ENCODE measurements at regions of chr15 and their contacts with region 1.

Region 1: DNA sequence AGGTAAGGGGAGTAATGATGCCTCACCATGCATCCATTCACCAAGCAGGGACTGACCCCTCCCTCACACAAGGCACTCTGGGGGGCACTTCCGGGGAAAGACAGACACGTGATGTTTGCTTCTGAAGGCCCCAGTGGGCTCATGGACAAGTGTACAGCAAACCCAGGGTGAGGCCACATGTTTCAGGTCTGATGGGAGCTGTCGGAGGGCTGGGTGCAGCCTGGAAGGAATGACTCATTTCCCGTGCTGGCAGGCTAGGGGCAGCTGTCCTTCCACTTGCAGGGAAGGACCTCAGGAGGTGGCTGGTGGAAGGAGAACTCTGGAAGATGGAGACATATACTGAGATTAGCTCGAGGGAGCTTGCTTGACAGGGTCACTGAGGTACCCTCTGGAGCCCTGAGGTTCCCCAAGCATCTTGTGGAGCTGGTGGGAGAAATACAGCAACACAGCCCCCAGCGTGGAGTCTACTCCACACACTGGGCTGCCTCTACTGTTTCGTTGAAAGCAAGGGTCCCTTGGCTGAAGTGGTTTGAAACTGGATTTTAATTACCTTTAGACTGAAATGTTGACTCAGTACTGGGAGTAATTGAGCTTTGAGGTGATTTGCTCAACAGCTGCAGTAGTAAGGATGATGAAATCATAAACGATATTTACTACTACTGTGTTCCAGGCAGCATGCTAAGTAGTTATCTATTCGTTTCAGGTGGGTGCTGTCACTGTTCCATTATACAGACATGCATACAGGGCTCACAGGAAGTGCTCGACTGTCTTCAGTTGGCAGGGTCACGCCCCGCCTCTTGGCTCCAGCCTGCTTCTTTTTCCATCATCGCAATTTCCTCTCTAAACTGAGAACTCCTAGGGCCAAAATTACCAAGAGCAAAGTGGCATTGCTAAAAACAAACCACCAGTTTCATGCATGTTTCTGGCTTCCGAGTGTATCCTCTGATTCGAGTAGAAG is 230.4 kb downstream of the ADAMTS17 start:
- DNase-seq: peak; percentile 75
- H3K4me3 Mint-ChIP-seq: no peak overlapping the region
- H3K27ac Mint-ChIP-seq: peak overlapping the region; percentile 95
- H3K4me1 Mint-ChIP-seq: peaks cover 27% of the 10 kb centered on the region
- H3K27me3 Mint-ChIP-seq: no peaks in the 10 kb centered on the region

Region 2: DNA sequence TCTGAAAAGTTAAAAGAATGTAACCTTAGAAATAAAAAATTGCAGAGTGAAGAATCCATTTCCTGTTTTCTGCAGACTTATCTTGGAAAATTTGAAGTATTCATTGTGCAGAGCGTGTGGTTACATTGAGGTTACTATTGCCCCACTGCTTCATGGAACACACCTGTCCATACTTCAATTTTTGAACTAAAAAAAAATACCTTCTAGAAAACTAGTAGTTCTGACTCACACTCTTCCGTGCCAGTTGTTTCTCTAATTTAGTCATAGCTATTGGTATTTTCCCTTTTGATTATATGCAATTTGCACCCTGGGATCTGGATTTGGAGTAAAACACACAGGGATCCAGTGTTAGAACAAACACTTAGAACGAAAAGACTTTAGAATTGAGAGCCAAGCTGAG is 266.4 kb before region 1 on chr15:
- CTCF ChIA-PET with region 1: no interaction called
- POLR2A ChIA-PET with region 1: no interaction called
- intact Hi-C with region 1: loop called (anchors 10 kb)
- DNase-seq: peak; percentile 42
- H3K4me3 Mint-ChIP-seq: no peak overlapping the region
- H3K27ac Mint-ChIP-seq: peak overlapping the region; percentile 46
- H3K4me1 Mint-ChIP-seq: peaks cover 49% of the 10 kb centered on the region
- H3K27me3 Mint-ChIP-seq: no peaks in the 10 kb centered on the region

Region 3: DNA sequence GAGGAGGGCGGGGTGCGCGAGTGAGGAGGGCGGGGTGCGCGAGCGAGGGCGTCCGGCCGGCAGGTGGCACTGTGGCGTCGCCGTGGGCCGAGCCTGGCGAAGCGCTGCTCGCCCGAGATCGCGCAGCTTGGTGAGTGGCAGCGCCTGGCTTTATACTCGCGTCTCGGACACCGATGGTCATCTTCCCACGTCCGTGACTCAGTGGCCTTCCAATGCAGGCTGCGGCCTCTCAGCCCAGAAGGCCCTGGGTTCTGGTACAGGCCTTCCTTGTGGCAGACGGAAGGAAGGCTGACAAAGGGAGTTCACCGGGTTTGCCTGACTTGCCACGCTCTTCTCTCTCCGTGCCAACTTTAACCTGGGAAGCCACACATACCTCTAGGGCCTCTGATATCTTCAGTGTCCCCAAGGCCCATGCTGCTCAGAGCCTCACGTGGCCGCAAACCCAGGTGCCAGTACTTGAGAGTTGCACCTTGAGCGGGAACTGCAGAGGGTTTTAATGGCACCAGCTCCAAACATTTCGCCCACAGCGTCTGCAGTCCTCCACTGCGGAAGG is 182.9 kb before region 1 on chr15:
- CTCF ChIA-PET with region 1: interaction called, 4 read pairs
- POLR2A ChIA-PET with region 1: no interaction called
- intact Hi-C with region 1: loop called (anchors 2 kb)
- DNase-seq: peak; percentile 87
- H3K4me3 Mint-ChIP-seq: peak overlapping the region; percentile 77
- H3K27ac Mint-ChIP-seq: peak overlapping the region; percentile 42
- H3K4me1 Mint-ChIP-seq: peaks cover 8% of the 10 kb centered on the region
- H3K27me3 Mint-ChIP-seq: no peaks in the 10 kb centered on the region

Region 4: GRCh38 chr15:100008258-100008657 is 103.1 kb before region 1 on chr15:
- CTCF ChIA-PET with region 1: no interaction called
- POLR2A ChIA-PET with region 1: no interaction called
- intact Hi-C with region 1: loop called (anchors 10 kb)
- DNase-seq: no peak
- H3K4me3 Mint-ChIP-seq: no peak overlapping the region
- H3K27ac Mint-ChIP-seq: no peak overlapping the region
- H3K4me1 Mint-ChIP-seq: no peaks in the 10 kb centered on the region
- H3K27me3 Mint-ChIP-seq: no peaks in the 10 kb centered on the region

Region 5: DNA sequence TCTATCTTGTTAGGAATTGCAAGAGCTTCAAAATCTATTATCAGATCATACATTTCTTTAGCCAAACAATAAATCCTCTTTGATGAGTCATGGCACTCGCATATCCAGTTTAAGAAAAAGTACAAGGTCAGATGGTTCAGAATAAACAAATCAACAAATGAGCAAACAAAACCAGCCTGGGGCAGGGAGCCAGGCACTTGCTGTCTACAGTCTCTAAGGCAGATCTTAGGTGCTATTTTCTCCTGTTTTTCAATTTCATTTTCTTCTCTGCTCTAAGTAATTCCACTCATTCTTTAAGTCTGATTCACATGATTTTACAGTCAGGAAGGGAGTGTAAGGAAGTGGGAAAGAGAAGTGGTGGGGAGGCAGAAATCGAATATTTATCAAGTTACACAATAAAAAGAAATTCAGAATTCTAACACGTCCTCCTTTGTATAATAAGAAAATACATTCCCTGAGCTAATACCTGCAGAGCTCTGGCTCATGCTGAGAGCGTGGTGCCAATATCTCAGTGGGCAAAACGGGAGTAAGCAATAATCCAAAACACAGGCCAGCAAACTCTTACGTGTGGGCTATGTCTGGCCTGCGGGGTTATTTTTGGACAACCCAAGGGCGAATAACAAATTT is 68.3 kb before region 1 on chr15:
- CTCF ChIA-PET with region 1: no interaction called
- POLR2A ChIA-PET with region 1: no interaction called
- intact Hi-C with region 1: no loop called
- DNase-seq: no peak
- H3K4me3 Mint-ChIP-seq: no peak overlapping the region
- H3K27ac Mint-ChIP-seq: no peak overlapping the region
- H3K4me1 Mint-ChIP-seq: peaks cover 4% of the 10 kb centered on the region
- H3K27me3 Mint-ChIP-seq: no peaks in the 10 kb centered on the region

Region 6: GRCh38 chr15:100053474-100054121 is 57.8 kb before region 1 on chr15:
- CTCF ChIA-PET with region 1: no interaction called
- POLR2A ChIA-PET with region 1: no interaction called
- intact Hi-C with region 1: no loop called
- DNase-seq: no peak
- H3K4me3 Mint-ChIP-seq: no peak overlapping the region
- H3K27ac Mint-ChIP-seq: no peak overlapping the region
- H3K4me1 Mint-ChIP-seq: no peaks in the 10 kb centered on the region
- H3K27me3 Mint-ChIP-seq: no peaks in the 10 kb centered on the region

Region 7: GRCh38 chr15:100170291-100171210 is 59.2 kb after region 1 on chr15:
- CTCF ChIA-PET with region 1: no interaction called
- POLR2A ChIA-PET with region 1: no interaction called
- intact Hi-C with region 1: loop called (anchors 1 kb)
- DNase-seq: peak; percentile 74
- H3K4me3 Mint-ChIP-seq: no peak overlapping the region
- H3K27ac Mint-ChIP-seq: peak overlapping the region; percentile 83
- H3K4me1 Mint-ChIP-seq: peaks cover 12% of the 10 kb centered on the region
- H3K27me3 Mint-ChIP-seq: peaks cover 2% of the 10 kb centered on the region

Region 8: GRCh38 chr15:100341662-100342560 is 230.5 kb after region 1 on chr15 and contains the start of gene ADAMTS17:
- CTCF ChIA-PET with region 1: interaction called, 3 read pairs
- POLR2A ChIA-PET with region 1: no interaction called
- intact Hi-C with region 1: loop called (anchors 5 kb)
- DNase-seq: peak; percentile 95
- H3K4me3 Mint-ChIP-seq: peak within 1 kb of the TSS; percentile 54
- H3K27ac Mint-ChIP-seq: no peak within 1 kb of the TSS
- H3K4me1 Mint-ChIP-seq: peaks cover 15% of the 10 kb centered on the region
- H3K27me3 Mint-ChIP-seq: no peaks in the 10 kb centered on the region
- total RNA-seq, gene ADAMTS17: 0.99 to 1.2 TPM

Region 9: DNA sequence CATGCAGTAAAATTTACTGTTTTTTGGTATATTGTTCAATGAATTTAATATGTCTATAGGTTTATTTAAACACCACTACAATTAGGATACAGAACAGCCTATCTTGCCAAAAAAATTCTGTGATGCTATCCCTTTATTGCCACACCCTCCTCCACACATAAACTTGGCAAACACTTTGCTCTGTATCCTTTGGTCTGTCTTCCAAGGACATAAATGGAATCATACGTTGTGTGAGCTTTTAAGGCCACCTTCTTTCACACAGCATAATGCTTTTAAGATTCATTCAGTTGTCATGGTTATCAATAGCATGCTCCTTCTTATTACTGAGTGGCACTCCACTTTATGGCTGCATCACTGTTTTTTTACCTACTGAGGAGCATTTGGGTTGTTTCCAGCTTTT is 345.8 kb after region 1 on chr15:
- CTCF ChIA-PET with region 1: no interaction called
- POLR2A ChIA-PET with region 1: no interaction called
- intact Hi-C with region 1: no loop called
- DNase-seq: no peak
- H3K4me3 Mint-ChIP-seq: no peak overlapping the region
- H3K27ac Mint-ChIP-seq: no peak overlapping the region
- H3K4me1 Mint-ChIP-seq: peaks cover 3% of the 10 kb centered on the region
- H3K27me3 Mint-ChIP-seq: peaks cover 2% of the 10 kb centered on the region

Measured in activated CD4-positive, alpha-beta memory T cell treated with anti-CD3 and anti-CD28 coated beads for 36 hours (primary cell).